AG04450 (cell line): ENCODE measurements at regions of chr3 and their contacts with region 1.

Region 1: GRCh38 chr3:170247875-170248274 is 25.7 kb downstream of the PRKCI start:
- DNase-seq: no peak
- H3K4me3 ChIP-seq: no peak overlapping the region
- H3K27ac ChIP-seq: no peak overlapping the region
- H3K27me3 ChIP-seq: no peaks in the 10 kb centered on the region
- CTCF ChIP-seq: no peak

Region 2: GRCh38 chr3:170221924-170222646 is 25.8 kb before region 1 on chr3 and contains the start of gene PRKCI:
- CTCF ChIA-PET with region 1: interaction called, 3 read pairs
- POLR2A ChIA-PET with region 1: interaction called, 14 read pairs
- DNase-seq: peak; percentile 94
- H3K4me3 ChIP-seq: peak within 1 kb of the TSS; percentile 82
- H3K27ac ChIP-seq: peak within 1 kb of the TSS; percentile 96
- H3K27me3 ChIP-seq: no peaks in the 10 kb centered on the region
- CTCF ChIP-seq: no peak
- polyA plus RNA-seq, gene PRKCI: 54.5 and 84.3 TPM in 2 replicates

Region 3: DNA sequence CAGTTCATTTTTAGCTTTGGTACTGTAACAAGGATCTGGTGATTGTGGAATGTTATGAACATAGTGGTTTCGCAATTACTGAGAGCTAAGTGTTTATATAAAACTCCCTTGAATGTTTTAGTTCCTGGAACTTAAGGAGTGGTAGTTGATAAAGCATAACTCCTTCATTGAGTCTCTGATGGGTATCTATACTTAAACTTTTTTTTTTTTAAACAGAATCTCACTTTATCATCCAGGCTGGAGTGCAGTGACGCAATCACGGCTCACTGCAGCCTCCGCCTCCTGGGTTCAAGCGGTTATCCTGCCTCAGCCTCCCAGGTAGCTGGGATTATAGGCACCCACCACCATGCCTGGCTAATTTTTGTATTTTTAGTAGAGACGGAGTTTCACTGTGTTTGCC is 14.3 kb before region 1 on chr3:
- CTCF ChIA-PET with region 1: no interaction called
- POLR2A ChIA-PET with region 1: no interaction called
- DNase-seq: peak; percentile 68
- H3K4me3 ChIP-seq: no peak overlapping the region
- H3K27ac ChIP-seq: peak overlapping the region; percentile 31
- H3K27me3 ChIP-seq: no peaks in the 10 kb centered on the region
- CTCF ChIP-seq: no peak

Region 4: GRCh38 chr3:170589113-170589512 is 341.2 kb after region 1 on chr3:
- CTCF ChIA-PET with region 1: no interaction called
- POLR2A ChIA-PET with region 1: no interaction called
- DNase-seq: no peak
- H3K4me3 ChIP-seq: no peak overlapping the region
- H3K27ac ChIP-seq: no peak overlapping the region
- H3K27me3 ChIP-seq: peaks cover 22% of the 10 kb centered on the region
- CTCF ChIP-seq: no peak